Activated CD4-positive, alpha-beta T cell treated with anti-CD3 and anti-CD28 coated beads, Interleukin-2, amount 10 ng/mL, durations not matched to agents 24 days and 14 days (primary cell): ENCODE measurements at regions of chr22 and their contacts with region 1.

Region 1: DNA sequence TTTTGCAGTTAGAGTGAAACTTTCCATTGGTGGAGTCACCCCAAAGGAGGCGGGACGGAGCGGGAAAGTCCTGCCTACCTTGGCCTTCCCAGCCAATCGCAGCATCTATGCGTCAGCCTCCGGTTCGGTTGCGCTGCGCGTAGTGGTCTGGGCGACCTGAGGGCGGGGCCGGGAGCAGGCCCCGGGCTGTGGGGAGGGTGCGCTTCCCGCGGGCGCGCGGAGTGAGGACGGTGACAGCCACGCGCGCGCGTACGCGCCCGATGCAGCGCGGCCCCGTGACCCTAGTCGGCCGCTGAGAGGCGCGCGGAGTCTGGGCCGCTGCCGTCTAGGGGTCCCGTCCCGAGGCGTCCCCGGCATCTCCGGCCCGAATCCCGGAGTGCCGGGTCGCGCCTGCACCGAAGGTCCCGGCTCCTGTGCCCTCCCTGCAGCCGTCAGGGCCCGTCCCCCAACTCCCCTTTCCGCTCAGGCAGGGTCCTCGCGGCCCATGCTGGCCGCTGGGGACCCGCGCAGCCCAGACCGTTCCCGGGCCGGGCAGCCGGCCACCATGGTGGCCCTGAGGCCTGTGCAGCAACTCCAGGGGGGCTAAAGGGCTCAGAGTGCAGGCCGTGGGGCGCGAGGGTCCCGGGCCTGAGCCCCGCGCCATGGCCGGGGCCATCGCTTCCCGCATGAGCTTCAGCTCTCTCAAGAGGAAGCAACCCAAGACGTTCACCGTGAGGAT is at the start of gene NF2:
- DNase-seq: peak; percentile 100
- H3K4me3 Mint-ChIP-seq: peak within 1 kb of the TSS; percentile 91
- H3K27ac Mint-ChIP-seq: peak within 1 kb of the TSS; percentile 98
- H3K4me1 Mint-ChIP-seq: peaks cover 14% of the 10 kb centered on the region
- H3K27me3 Mint-ChIP-seq: no peaks in the 10 kb centered on the region
- total RNA-seq, gene NF2: 59.1 and 61.9 TPM in 2 replicates

Region 2: GRCh38 chr22:29487426-29487986 is 116.0 kb before region 1 on chr22:
- intact Hi-C with region 1: no loop called
- DNase-seq: no peak
- H3K4me3 Mint-ChIP-seq: no peak overlapping the region
- H3K27ac Mint-ChIP-seq: no peak overlapping the region
- H3K4me1 Mint-ChIP-seq: no peaks in the 10 kb centered on the region
- H3K27me3 Mint-ChIP-seq: peaks cover 3% of the 10 kb centered on the region

Region 3: GRCh38 chr22:29553351-29554224 is 49.9 kb before region 1 on chr22 and contains the start of gene THOC5:
- intact Hi-C with region 1: no loop called
- DNase-seq: peak; percentile 97
- H3K4me3 Mint-ChIP-seq: peak within 1 kb of the TSS; percentile 97
- H3K27ac Mint-ChIP-seq: peak within 1 kb of the TSS; percentile 96
- H3K4me1 Mint-ChIP-seq: peaks cover 12% of the 10 kb centered on the region
- H3K27me3 Mint-ChIP-seq: no peaks in the 10 kb centered on the region
- total RNA-seq, gene THOC5: 66.6 and 68.1 TPM in 2 replicates

Region 4: GRCh38 chr22:29581807-29582206 is 21.7 kb before region 1 on chr22:
- intact Hi-C with region 1: loop called (anchors 1 kb)
- DNase-seq: no peak
- H3K4me3 Mint-ChIP-seq: peak overlapping the region; percentile 96
- H3K27ac Mint-ChIP-seq: peak overlapping the region; percentile 95
- H3K4me1 Mint-ChIP-seq: peaks cover 17% of the 10 kb centered on the region
- H3K27me3 Mint-ChIP-seq: no peaks in the 10 kb centered on the region

Region 5: DNA sequence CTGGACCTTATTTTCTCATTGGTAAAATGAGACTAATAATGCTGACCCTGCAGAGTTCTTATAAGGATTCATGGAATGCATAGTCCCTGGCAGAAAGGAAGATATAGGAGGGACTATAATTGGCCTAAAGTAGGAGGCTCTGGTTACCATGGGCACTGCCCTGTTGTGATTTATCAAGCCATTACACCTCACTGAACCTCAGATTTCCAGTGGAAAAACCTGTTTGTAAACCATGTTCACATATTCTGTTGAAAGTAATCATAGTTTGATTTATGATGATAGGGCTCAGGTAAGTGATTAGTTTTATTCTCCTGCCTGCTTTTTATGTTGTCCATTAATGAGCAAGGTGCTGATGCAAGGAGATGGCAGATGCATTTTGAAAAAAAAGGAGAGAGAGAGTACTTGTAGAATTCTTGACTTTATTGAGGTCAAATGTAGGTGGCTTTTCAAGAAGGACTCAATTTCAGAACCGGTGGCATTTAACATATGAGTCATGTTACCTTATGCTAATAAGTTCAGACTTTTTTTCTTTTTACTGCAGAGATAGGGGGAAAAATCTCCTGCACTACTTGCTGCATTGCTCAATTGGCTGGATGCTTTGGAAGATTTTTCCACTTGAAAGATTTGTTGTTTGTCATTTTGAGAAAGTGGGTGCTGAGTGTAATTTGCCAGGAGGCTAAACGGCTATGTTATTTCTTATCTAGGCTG is 14.6 kb after region 1 on chr22:
- intact Hi-C with region 1: loop called (anchors 1 kb)
- DNase-seq: no peak
- H3K4me3 Mint-ChIP-seq: peak overlapping the region; percentile 36
- H3K27ac Mint-ChIP-seq: peak overlapping the region; percentile 63
- H3K4me1 Mint-ChIP-seq: peaks cover 29% of the 10 kb centered on the region
- H3K27me3 Mint-ChIP-seq: no peaks in the 10 kb centered on the region